ENCODE measurements at regions of chr1 and their contacts with region 1.

Region 1: DNA sequence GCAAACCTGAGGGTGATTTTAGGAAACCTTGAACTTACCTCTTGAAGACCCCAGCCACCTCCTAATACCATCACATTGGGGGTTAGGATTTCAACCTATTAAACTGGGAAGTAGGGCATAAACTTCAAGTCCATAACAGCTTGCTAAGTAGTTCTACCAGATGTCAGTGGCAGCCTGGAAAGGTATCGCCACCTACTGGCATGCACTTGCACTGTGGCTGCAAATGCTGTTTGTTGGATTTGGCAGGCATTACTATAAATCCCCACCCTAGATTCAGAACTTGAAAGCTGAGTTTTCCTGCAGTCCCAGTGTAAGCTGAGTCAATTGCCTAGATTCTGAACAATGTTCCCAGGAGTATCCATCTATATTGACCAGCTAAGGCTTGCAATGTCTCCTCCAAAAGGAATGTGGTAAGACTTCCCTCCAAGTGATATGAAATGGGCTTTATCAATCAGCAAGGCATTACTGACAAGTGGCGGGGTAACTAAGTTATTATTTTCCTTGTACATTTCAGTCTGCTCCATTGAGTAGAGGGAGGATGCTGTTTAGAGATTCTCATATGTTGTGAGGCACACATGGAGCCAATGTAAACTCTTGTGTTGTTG is 474.5 kb downstream of the PTPRC start:
- DNase-seq: peak; percentile 38 to 73
- H3K4me3 ChIP-seq: no peak overlapping the region
- H3K27ac ChIP-seq: no peak overlapping the region
- H3K4me1 ChIP-seq: 0 out of 7 replicates have a peak, but pooled peaks cover 0 to 5% (median 0%) of the 10 kb centered on the region in 4 experiments
- H3K27me3 ChIP-seq: no peaks in the 10 kb centered on the region
- CTCF ChIP-seq: peak; percentile 79 to 96 (median 92)
- EP300 ChIP-seq: no peak
- POLR2A ChIP-seq: no peak
- RAD21 ChIP-seq: peak; percentile 87 to 91

Region 2: DNA sequence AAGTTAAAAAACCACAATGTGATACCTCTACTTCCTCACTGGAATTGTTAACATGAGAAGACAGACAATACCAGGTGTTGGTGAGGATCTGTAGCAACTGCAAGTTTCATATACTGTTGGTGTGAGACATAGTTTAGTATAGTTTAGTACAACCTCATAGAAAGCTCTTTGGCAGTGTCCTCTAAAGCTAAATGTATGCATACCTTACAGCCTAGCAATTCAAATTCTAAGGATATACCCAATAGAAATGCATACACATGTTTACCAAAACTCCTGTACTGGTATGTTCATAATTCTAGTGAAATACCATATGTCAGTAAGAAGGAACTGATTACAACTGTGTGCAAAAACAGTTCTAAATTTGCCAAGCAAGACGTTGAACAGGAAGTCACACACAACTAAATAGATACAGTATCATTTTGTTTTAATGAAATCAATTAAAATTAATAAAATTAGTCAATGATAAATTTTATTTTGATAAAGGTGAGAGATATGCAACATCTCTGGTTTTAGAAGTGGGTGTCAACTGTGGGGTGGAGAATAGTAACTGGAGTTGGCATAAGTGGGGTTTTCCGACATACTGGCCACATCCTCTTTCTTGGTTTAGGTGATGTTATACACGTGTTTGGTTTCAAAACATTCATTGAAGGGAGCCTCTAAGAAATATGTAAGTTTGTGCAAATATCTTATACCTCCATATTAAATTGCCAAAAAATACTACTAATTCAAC is 23.8 kb before region 1 on chr1:
- CTCF ChIA-PET with region 1: interaction called, 10 read pairs
- POLR2A ChIA-PET with region 1: no interaction called
- DNase-seq: no peak
- H3K4me3 ChIP-seq: no peak overlapping the region
- H3K27ac ChIP-seq: no peak overlapping the region
- H3K4me1 ChIP-seq: no peaks in the 10 kb centered on the region
- H3K27me3 ChIP-seq: no peaks in the 10 kb centered on the region
- CTCF ChIP-seq: no peak
- EP300 ChIP-seq: no peak
- POLR2A ChIP-seq: no peak
- RAD21 ChIP-seq: no peak

Region 3: DNA sequence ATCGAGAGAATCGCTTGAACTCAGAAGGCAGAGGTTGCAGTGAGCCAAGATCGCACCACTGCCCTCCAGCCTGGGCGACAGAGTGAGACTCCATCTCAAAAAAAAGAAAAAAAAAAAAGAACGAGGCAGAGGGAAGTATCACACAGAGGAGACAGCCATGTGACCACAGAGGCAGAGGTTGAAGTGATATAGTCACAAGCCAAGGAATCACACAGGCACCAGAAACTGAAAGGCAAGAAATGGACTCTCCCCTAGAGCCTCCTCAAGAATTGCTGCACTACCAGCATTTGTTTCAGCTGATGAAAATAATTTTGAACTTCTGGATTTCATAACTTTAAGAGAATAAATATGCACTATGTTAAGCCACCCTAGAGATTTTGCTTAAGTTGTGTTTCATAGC is 14.9 kb before region 1 on chr1:
- CTCF ChIA-PET with region 1: interaction called, 11 read pairs
- POLR2A ChIA-PET with region 1: no interaction called
- DNase-seq: no peak
- H3K4me3 ChIP-seq: no peak overlapping the region
- H3K27ac ChIP-seq: no peak overlapping the region
- H3K4me1 ChIP-seq: no peaks in the 10 kb centered on the region
- H3K27me3 ChIP-seq: no peaks in the 10 kb centered on the region
- CTCF ChIP-seq: no peak
- EP300 ChIP-seq: no peak
- POLR2A ChIP-seq: no peak
- RAD21 ChIP-seq: no peak

Region 4: GRCh38 chr1:199123615-199124014 is 10.2 kb after region 1 on chr1:
- CTCF ChIA-PET with region 1: interaction called, 14 read pairs
- POLR2A ChIA-PET with region 1: no interaction called
- DNase-seq: no peak
- H3K4me3 ChIP-seq: no peak overlapping the region
- H3K27ac ChIP-seq: no peak overlapping the region
- H3K4me1 ChIP-seq: no peaks in the 10 kb centered on the region
- H3K27me3 ChIP-seq: no peaks in the 10 kb centered on the region
- CTCF ChIP-seq: no peak
- EP300 ChIP-seq: no peak
- POLR2A ChIP-seq: no peak
- RAD21 ChIP-seq: no peak